Head of caudate nucleus (tissue), 42 donors: ENCODE measurements at regions of chr3 and their contacts with region 1.

Region 1: GRCh38 chr3:4877173-4877787 is 102.0 kb upstream of the BHLHE40 start:
- DNase-seq: no peak

Region 2: GRCh38 chr3:4888913-4889846 is 11.9 kb after region 1 on chr3:
- intact Hi-C with region 1: no loop called
- DNase-seq: no peak

Region 3: DNA sequence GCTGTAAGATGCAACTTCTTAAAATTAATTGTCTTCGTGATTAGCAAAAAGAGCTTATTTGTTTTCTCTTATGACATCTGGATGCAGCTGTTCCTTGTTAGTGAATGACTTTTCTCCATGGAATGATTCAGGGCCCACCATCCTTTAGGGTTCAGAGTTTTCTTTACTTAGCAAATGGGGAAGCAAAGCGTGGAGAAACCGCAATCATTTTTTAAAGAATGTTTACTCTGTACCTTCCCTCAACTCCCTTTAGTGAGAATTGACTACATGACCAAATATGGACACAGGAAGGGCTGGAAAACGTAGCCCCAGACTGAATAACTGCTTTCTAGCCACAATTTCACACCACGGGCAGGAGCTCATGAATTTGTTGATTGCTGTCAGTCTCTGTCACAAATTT is 440.3 kb after region 1 on chr3:
- intact Hi-C with region 1: loop called (anchors 10 kb)
- DNase-seq: no peak